GM12878 (cell line): ENCODE measurements at regions of chr1 and their contacts with region 1.

Region 1: GRCh38 chr1:172443626-172444453 is at the start of gene PIGC:
- DNase-seq: peak; percentile 59
- ATAC-seq: peak; percentile 99
- H3K4me3 ChIP-seq: peak within 1 kb of the TSS; percentile 94
- H3K27ac ChIP-seq: peak within 1 kb of the TSS; percentile 82
- H3K4me1 ChIP-seq: no peaks in the 10 kb centered on the region
- H3K27me3 ChIP-seq: no peaks in the 10 kb centered on the region
- CTCF ChIP-seq: peak; percentile 89 to 93 (median 91)
- EP300 ChIP-seq: no peak
- POLR2A ChIP-seq: peak; percentile 91
- RAD21 ChIP-seq: peak; percentile 73
- polyA plus RNA-seq, gene PIGC: 23.3 to 29.7 TPM

Region 2: DNA sequence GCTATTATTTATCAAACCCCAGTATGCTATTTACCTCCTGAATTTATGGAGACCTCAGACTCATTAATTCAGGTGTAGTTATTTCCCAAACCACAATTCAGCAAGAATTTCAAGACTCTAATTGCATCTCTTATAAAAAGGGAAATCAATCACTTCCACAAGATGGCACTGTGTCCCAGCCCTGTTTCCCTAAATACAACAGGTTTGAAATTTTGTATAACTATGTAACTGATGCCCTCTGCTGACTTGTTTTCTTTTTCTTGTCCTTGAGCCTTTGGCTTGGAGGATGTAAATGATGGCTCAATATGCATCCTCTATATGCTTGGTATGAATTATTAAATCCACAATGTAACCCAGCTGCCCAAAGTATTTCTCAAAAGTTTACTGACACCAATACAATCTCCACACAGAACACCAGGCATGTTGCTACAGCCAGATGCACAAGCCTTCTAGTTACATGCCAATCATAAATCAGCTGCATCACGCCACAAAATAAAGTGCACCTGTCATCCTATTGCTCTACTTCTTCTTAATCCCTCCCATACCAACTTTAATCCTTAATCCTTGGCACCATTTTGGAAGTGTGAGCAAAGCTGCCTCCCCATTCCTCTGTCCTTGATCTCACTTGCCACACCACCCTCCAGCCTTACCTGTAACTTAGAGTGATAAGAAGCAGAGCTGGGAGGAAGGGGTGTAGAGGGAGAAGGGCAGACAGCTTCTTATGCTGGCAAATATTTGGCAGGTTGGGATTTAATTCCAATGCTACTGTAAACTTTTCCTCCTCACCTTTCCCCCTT is 14.3 kb before region 1 on chr1:
- CTCF ChIA-PET with region 1: interaction called, 23 read pairs
- POLR2A ChIA-PET with region 1: no interaction called
- RAD21 ChIA-PET with region 1: interaction called, 8 read pairs
- SMC1A ChIA-PET with region 1: interaction called, 5 read pairs
- in situ Hi-C with region 1: no loop called
- intact Hi-C with region 1: no loop called
- DNase-seq: peak; percentile 34
- ATAC-seq: peak; percentile 85
- H3K4me3 ChIP-seq: no peak overlapping the region
- H3K27ac ChIP-seq: no peak overlapping the region
- H3K4me1 ChIP-seq: peaks cover 8% of the 10 kb centered on the region
- H3K27me3 ChIP-seq: no peaks in the 10 kb centered on the region
- CTCF ChIP-seq: peak; percentile 56 to 75 (median 65)
- EP300 ChIP-seq: no peak
- POLR2A ChIP-seq: no peak
- RAD21 ChIP-seq: peak; percentile 67

Region 3: DNA sequence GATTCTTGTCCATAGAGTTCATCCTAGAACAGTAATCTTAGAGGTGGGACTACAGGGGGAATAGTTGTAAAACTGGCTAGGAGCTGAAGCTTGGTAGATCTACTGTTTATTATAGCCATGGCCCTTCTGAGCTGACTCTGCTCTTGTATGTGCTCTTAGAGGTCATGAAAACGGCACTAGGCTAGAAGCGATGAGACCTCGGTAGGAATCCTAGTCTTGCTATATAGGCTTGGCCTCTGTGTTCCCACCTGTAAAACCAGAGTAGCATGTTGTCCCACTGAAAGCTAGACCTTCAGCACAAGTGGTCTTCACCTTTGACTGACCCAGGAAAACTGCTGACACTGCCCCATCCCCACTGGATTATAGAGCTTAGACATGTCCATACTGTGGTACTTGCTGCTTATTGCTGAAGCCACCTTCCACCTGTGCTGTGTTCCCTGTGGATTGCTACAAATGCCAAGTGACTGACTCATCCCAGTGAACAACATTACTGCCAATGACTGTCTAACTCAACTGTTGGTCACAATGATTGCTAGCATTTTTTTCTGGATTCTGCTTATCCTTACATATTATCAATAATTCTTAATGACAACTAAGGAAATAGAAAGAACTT is 23.1 kb after region 1 on chr1:
- CTCF ChIA-PET with region 1: no interaction called
- POLR2A ChIA-PET with region 1: no interaction called
- RAD21 ChIA-PET with region 1: no interaction called
- SMC1A ChIA-PET with region 1: no interaction called
- in situ Hi-C with region 1: no loop called
- intact Hi-C with region 1: no loop called
- DNase-seq: no peak
- ATAC-seq: no peak
- H3K4me3 ChIP-seq: no peak overlapping the region
- H3K27ac ChIP-seq: no peak overlapping the region
- H3K4me1 ChIP-seq: no peaks in the 10 kb centered on the region
- H3K27me3 ChIP-seq: no peaks in the 10 kb centered on the region; a peak in 2 of 4 replicates
- CTCF ChIP-seq: no peak
- EP300 ChIP-seq: no peak
- POLR2A ChIP-seq: no peak
- RAD21 ChIP-seq: no peak

Region 4: GRCh38 chr1:172497230-172497629 is 53.4 kb after region 1 on chr1:
- CTCF ChIA-PET with region 1: no interaction called
- POLR2A ChIA-PET with region 1: no interaction called
- RAD21 ChIA-PET with region 1: no interaction called
- SMC1A ChIA-PET with region 1: no interaction called
- in situ Hi-C with region 1: no loop called
- intact Hi-C with region 1: no loop called
- DNase-seq: no peak
- ATAC-seq: no peak
- H3K4me3 ChIP-seq: no peak overlapping the region
- H3K27ac ChIP-seq: no peak overlapping the region
- H3K4me1 ChIP-seq: no peaks in the 10 kb centered on the region
- H3K27me3 ChIP-seq: peaks cover 0 to under 1% of the 10 kb centered on the region in 2 experiments; a peak in 2 of 4 replicates
- CTCF ChIP-seq: no peak
- EP300 ChIP-seq: no peak
- POLR2A ChIP-seq: no peak
- RAD21 ChIP-seq: no peak